ENCODE measurements at regions of chr2 and their contacts with region 1.

Region 1: GRCh38 chr2:171574149-171574795 is 52.0 kb downstream of the CYBRD1 start:
- DNase-seq: peak; percentile 91
- ATAC-seq: peak; percentile 100
- H3K4me3 Mint-ChIP-seq: no peak overlapping the region
- H3K27ac Mint-ChIP-seq: no peak overlapping the region
- H3K4me1 Mint-ChIP-seq: peaks cover 6% of the 10 kb centered on the region
- H3K27me3 Mint-ChIP-seq: no peaks in the 10 kb centered on the region

Region 2: DNA sequence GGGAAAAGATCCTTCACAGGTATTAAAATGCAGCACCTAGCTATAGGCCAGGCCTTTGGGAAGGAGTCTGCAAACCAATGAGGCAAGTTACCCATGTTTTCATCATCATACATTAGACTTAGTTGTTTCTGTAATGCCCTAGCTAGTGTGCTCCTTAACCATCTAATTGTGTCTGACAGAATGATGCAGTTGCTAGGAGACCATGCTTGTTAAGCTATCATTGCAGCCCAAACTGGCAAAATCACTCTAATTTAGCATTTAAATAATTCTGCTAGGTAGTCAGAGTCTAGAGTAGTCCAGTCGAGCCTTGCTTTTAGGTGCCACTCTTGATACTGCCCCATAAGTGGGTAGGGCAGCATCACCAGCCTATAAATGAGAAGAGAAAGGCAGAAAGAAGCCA is 722.6 kb before region 1 on chr2:
- CTCF ChIA-PET with region 1: no interaction called
- POLR2A ChIA-PET with region 1: no interaction called
- intact Hi-C with region 1: no loop called
- DNase-seq: no peak
- ATAC-seq: no peak
- H3K4me3 Mint-ChIP-seq: no peak overlapping the region
- H3K27ac Mint-ChIP-seq: no peak overlapping the region
- H3K4me1 Mint-ChIP-seq: no peaks in the 10 kb centered on the region
- H3K27me3 Mint-ChIP-seq: no peaks in the 10 kb centered on the region

Region 3: GRCh38 chr2:171703574-171704347 is 129.5 kb after region 1 on chr2:
- CTCF ChIA-PET with region 1: interaction called, 10 read pairs
- POLR2A ChIA-PET with region 1: no interaction called
- intact Hi-C with region 1: loop called in 1 of 2 experiments (anchors 5 kb)
- DNase-seq: no peak
- ATAC-seq: no peak
- H3K4me3 Mint-ChIP-seq: no peak overlapping the region
- H3K27ac Mint-ChIP-seq: no peak overlapping the region
- H3K4me1 Mint-ChIP-seq: peaks cover 8% of the 10 kb centered on the region
- H3K27me3 Mint-ChIP-seq: no peaks in the 10 kb centered on the region

Region 4: GRCh38 chr2:171824086-171824485 is 249.8 kb after region 1 on chr2:
- CTCF ChIA-PET with region 1: no interaction called
- POLR2A ChIA-PET with region 1: no interaction called
- intact Hi-C with region 1: no loop called
- DNase-seq: no peak
- ATAC-seq: no peak
- H3K4me3 Mint-ChIP-seq: no peak overlapping the region
- H3K27ac Mint-ChIP-seq: no peak overlapping the region
- H3K4me1 Mint-ChIP-seq: no peaks in the 10 kb centered on the region
- H3K27me3 Mint-ChIP-seq: no peaks in the 10 kb centered on the region

Measured in activated CD4-positive, alpha-beta T cell treated with anti-CD3 and anti-CD28 coated beads for 36 hours (primary cell).